ENCODE measurements at regions of chr18 and their contacts with region 1.

Region 1: DNA sequence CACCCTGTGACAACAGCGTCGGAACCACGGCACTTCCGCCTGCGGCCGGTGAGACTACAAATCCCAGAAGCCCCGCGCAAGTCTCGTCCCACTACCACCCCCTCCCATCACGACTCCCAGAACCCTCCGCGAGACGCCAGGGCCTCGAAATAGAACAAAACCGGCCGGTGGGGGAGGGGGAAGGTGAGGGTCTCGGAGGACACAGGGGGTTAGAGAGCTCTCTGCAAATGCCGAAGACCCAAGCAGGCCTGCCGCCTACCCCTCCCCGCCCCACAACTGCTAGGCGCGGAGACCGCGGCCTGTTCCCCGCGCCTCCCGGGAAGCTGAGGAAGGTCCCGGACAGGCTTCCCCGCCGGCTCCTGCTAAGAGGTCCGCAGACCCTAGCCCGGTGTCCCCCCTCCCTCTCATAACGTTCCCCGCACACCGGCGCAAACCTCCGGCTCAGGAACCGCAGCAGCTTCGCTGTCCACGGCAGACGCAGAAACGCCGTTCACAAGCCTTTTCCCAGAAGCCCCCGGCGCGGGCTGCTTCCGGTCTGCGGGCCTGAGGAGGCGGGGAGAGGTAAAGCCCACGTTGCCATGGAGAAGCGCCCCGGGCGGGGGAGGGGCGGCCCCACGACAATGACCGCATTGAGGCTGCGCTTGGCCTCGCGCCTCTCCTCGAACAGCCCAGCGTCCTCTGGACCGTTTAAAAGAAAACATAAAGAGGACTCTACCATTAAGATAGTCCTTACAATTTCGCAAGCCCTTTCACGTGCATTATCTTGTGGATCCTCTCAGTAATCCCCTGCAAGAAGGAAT is at the start of gene ZNF24:
- DNase-seq: peak; percentile 93 to 99 (median 96)

Region 2: DNA sequence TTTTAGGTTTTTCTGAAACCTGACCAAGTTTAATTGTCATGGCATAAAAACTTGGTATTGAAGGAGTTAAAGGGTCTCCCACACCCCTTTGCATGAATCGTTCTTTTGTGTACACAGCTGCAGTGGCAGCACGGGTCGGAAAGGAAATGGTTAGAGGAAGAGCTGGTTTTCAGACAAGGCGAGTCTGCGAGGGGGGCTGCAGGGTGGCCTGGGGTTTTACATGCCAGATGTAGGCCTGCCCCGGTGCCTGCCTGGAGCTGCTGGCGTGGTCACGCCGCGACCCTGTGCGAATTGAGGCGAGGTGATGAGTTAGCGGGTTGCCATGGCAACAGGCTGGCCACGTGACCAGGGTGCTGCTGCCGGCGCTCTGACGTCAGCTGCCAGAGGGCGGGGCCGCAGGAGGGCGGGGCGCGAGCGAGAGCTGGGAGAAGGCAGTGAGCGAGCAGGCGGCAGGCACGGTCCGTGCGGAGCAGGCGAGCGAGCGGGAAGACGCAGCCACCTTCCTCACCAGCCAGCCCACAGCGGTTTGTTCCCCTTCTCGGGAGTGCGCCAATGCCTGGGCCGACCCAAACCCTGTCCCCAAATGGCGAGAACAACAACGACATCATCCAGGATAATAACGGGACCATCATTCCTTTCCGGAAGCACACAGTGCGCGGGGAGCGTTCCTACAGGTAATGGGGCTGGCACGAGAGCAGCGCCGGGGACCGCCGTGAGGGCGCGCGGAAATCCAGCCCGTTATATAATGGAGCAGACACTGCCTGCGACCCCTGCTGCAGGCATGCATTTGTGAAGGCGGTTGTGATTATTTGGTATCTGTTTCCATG is 302.9 kb before region 1 on chr18 and contains the start of gene MAPRE2:
- intact Hi-C with region 1: loop called (anchors 5 kb)
- DNase-seq: peak; percentile 98 to 100 (median 100)

Region 3: GRCh38 chr18:35231052-35231451 is 113.1 kb before region 1 on chr18:
- intact Hi-C with region 1: loop called (anchors 2 kb)
- DNase-seq: peak; percentile 56 to 96 (median 83)

Region 4: GRCh38 chr18:35240664-35241447 is 103.3 kb before region 1 on chr18 and contains the start of gene ZNF397:
- intact Hi-C with region 1: loop called (anchors 5 kb)
- DNase-seq: peak; percentile 94 to 99 (median 98)

Region 5: DNA sequence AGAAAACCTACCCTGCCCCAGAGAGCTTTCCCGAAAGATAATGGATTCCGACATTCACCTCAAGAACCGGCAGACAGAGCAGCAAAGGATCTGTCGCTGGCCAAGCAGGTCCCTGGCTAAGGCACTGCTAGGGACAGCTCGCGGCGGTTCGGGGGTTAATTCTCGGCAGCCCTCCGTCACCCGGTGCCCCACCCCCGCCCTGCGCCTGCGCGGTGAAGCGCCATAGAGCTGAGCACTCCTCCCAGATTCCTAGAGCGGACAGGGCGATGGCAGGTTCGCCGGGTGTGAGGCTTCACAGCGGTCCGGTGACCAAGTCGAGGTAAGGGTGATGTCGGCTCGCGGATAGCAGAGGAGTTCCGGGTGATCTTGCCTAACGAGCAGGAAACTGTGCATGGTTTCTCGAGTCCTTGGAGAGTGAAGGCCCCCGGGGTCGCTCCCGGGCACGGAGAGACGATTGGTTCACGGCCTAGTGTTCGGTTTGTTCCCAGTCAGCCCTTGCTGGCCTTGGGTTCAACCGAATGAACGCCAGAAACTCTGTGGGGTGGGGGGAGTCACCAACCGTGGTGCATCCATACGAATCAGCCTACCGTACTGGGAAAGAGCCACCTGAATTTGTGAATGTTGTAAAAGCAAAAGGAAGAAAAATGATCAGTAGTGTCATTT is 53.9 kb before region 1 on chr18 and contains the start of gene ZSCAN30:
- intact Hi-C with region 1: loop called (anchors 2 kb)
- DNase-seq: peak; percentile 92 to 99 (median 94)

Region 6: DNA sequence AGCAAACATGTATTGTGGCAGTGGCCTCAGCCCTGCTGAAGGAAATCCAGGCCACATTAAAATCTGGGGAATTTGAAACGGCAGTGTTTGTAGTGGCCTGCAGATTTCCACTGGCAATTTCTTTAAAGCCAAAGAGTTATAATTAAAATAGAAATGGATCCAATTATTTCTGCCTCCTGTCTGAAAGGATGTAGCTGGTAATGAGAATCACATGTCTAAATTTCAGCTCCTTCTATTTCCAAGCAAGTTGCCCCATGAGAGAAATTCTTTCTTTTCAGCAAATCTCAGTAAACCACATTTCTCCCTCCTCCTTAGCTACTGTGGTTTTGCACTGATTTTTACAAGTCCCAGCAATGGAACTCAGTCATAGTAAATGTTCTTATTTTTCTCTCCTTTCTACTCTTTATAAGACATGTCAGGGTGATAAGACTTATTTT is 88.4 kb after region 1 on chr18:
- intact Hi-C with region 1: no loop called
- DNase-seq: no peak

Measured in posterior cingulate gyrus (tissue), 11 donors.